ENCODE measurements at regions of chr19 and their contacts with region 1.

Region 1: DNA sequence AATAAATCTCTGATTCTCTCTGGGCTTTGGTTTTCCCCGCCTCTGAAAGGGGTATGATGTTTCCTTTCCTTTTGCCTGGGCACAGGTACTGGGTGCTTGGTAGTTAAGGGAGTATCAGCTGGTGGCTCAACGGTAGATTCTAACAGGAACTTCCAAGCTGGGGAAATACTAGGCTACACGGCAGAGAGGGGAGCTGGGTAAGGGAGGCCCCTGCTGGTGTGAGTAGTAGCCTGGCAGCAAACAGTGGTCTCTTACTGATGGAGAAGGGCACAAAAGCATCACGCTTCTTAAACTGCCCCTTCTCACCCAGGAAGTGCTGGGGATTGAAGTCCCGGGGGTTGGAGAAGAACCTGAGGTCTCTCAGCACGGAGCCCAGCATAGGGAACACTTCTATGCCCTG is 26.9 kb upstream of the CYP2A7 start:
- DNase-seq: peak; percentile 71
- H3K4me3 Mint-ChIP-seq: peak overlapping the region; percentile 71
- H3K27ac Mint-ChIP-seq: no peak overlapping the region
- H3K4me1 Mint-ChIP-seq: peaks cover 11% of the 10 kb centered on the region
- H3K27me3 Mint-ChIP-seq: peaks cover 8% of the 10 kb centered on the region

Region 2: GRCh38 chr19:40822161-40822560 is 86.8 kb before region 1 on chr19:
- CTCF ChIA-PET with region 1: interaction called, 3 read pairs
- intact Hi-C with region 1: loop called (anchors 1 kb)
- DNase-seq: no peak
- H3K4me3 Mint-ChIP-seq: no peak overlapping the region
- H3K27ac Mint-ChIP-seq: no peak overlapping the region
- H3K4me1 Mint-ChIP-seq: peaks cover 37% of the 10 kb centered on the region
- H3K27me3 Mint-ChIP-seq: no peaks in the 10 kb centered on the region

Region 3: GRCh38 chr19:40872209-40872608 is 36.8 kb before region 1 on chr19:
- CTCF ChIA-PET with region 1: no interaction called
- intact Hi-C with region 1: loop called (anchors 2 kb)
- DNase-seq: no peak
- H3K4me3 Mint-ChIP-seq: no peak overlapping the region
- H3K27ac Mint-ChIP-seq: no peak overlapping the region
- H3K4me1 Mint-ChIP-seq: peaks cover 7% of the 10 kb centered on the region
- H3K27me3 Mint-ChIP-seq: peaks cover 10% of the 10 kb centered on the region

Region 4: DNA sequence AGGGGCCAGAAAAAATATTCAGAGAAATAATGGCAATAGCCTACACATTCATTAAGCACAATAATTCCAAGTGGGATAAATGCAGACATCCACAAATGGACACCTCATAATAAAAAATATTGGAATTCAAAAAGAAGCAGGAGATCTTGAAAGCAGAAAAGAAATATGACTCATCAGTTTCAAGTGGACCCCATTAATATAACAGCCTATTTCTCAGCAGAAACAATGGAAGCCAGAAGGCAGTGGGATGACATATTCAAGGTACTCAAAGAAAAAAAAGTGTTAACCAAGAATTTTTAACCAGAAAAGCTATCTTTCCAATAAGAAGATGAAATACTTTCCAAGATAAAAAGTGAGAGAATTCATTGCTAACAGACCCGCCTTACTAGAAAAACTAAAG is 130.8 kb after region 1 on chr19:
- CTCF ChIA-PET with region 1: no interaction called
- intact Hi-C with region 1: no loop called
- DNase-seq: no peak
- H3K4me3 Mint-ChIP-seq: no peak overlapping the region
- H3K27ac Mint-ChIP-seq: no peak overlapping the region
- H3K4me1 Mint-ChIP-seq: no peaks in the 10 kb centered on the region
- H3K27me3 Mint-ChIP-seq: no peaks in the 10 kb centered on the region